ENCODE measurements at regions of chr9 and their contacts with region 1.

Region 1: DNA sequence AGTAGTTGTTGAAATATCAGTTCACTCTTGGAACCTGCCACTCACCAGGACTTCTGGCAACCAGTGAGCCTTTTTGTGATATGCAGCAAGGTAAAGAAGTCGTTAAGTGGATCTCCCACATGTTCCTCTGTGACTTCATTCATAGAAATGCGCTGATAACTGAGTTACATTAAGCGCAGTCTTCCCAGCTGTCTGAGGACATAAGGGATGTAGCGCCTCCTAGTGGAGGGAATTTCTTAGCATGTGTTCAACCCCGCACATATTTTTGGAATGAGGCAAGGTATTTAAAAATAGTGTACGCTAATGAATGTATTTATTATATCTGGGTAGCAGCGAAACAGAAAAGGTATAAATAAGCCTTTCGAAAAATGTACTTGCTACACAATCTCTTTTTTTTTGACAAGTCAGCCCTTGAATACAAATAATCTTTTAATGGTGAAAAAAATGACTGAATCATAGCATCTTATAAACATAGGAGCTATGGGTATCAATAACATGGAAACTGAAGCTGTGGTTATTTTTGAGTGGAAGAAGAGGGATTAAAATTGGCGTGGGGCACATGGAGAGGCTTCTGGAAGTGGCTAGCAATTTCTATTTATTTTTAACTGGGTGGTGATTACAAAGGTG is 38.0 kb downstream of the PALM2AKAP2 start:
- DNase-seq: peak in 1 of 2 donors; percentile 92
- ATAC-seq: peak; percentile 62 to 91 (median 86)
- H3K4me3 ChIP-seq: peak overlapping the region in 3 of 10 donors; percentile 5 to 17 (median 15)
- H3K27ac ChIP-seq: peak overlapping the region; percentile 9 to 83 (median 70)
- H3K4me1 ChIP-seq: peaks cover 5 to 37% (median 32%) of the 10 kb centered on the region in 9 donors
- H3K27me3 ChIP-seq: no peaks in the 10 kb centered on the region
- CTCF ChIP-seq: peak; percentile 78 to 89 (median 83)

Region 2: GRCh38 chr9:109870365-109870764 is 52.4 kb after region 1 on chr9:
- intact Hi-C with region 1: no loop called
- DNase-seq: no peak
- ATAC-seq: no peak
- H3K4me3 ChIP-seq: no peak overlapping the region
- H3K27ac ChIP-seq: peak overlapping the region in 9 of 10 donors; percentile 1 to 88 (median 55)
- H3K4me1 ChIP-seq: peaks cover 0 to 63% (median 15%) of the 10 kb centered on the region in 9 donors
- H3K27me3 ChIP-seq: peaks cover 0 to 3% (median 0%) of the 10 kb centered on the region in 7 donors
- CTCF ChIP-seq: no peak

Region 3: DNA sequence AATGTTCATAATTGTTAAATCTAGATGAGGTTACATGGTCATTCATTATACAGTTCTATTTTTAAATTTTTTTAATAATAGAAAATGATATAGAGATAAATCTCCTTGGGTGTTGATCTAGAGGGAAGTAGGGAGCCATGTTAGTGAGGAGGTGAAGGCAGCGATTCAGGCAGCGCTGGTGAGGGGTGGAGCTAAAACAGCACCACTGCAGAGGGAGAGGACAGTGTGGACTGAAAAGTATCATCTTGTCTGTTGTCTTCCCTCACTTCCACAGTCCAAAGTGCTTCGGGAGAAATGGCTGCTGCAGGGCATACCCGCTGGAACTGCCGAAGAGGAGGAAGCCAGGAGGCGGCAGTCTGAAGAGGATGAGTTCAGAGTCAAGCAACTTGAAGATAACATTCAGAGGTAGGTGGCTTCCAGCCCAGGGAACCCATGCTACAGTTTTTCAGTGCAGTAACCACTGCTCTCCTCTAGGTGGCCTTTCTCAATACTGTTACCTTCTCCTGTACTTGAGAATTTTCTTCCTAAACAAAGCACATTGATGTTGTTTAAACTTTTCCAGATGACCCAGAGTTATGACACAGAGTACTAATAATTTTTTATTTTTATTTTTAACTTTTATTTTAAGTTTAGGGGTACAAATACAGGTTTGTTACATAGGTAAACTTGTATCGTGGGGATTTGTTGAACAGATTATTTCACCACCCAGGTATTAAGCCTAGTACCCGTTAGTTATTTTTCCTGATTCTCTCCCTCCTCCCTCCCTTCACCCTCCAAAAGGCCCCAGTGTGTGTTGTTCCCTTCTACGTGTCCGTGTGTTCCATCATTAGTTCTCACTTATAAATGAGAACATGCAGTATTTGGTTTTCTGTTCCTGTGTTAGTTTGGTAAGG is 62.6 kb after region 1 on chr9:
- intact Hi-C with region 1: loop called in 2 of 10 experiments (anchors 5 to 10 kb)
- DNase-seq: no peak
- ATAC-seq: no peak
- H3K4me3 ChIP-seq: no peak overlapping the region
- H3K27ac ChIP-seq: no peak overlapping the region
- H3K4me1 ChIP-seq: peaks cover 0 to 27% (median 5%) of the 10 kb centered on the region in 9 donors
- H3K27me3 ChIP-seq: no peaks in the 10 kb centered on the region
- CTCF ChIP-seq: peak; percentile 14 to 73 (median 56)

Region 4: GRCh38 chr9:109887079-109887478 is 69.1 kb after region 1 on chr9:
- intact Hi-C with region 1: loop called in 2 of 10 experiments (anchors 5 to 10 kb)
- DNase-seq: peak in 1 of 2 donors; percentile 19
- ATAC-seq: peak; percentile 77 to 90 (median 86)
- H3K4me3 ChIP-seq: no peak overlapping the region
- H3K27ac ChIP-seq: peak overlapping the region; percentile 31 to 81 (median 68)
- H3K4me1 ChIP-seq: peaks cover 14 to 67% (median 46%) of the 10 kb centered on the region in 9 donors
- H3K27me3 ChIP-seq: no peaks in the 10 kb centered on the region
- CTCF ChIP-seq: no peak

Measured in heart right ventricle (tissue), 16 donors.